Aorta (tissue), 5 donors: ENCODE measurements at regions of chr9 and their contacts with region 1.

Region 1: DNA sequence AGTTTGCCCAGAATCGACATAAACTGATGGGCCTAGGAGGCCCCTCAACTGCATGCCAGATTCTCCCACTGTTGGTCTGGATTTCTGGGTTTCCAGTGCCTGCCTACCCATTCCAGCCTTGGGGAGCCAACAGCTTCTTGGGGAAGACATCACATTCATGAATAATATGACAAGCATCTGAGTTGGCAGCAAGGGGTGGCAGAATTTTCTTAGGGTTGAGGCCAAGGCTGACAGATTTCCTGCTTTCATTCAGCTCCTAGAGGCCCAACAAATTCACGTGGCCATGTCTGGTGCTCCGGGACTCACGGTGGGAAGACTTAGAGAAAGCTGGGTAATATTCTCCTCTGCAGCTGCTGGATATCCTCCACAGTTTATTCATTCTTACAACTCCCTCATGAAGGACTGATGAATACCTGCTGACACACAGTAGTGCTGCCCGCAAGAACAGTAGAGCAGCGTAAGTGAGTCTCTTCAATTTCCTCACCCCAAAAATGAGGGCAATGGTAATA is 305.0 kb upstream of the TNC start:
- DNase-seq: peak; percentile 74 to 77
- ATAC-seq: peak; percentile 65
- H3K4me3 ChIP-seq: no peak overlapping the region
- H3K27ac ChIP-seq: peak overlapping the region; percentile 20 to 85
- H3K4me1 ChIP-seq: no peaks in the 10 kb centered on the region
- H3K27me3 ChIP-seq: no peaks in the 10 kb centered on the region

Region 2: DNA sequence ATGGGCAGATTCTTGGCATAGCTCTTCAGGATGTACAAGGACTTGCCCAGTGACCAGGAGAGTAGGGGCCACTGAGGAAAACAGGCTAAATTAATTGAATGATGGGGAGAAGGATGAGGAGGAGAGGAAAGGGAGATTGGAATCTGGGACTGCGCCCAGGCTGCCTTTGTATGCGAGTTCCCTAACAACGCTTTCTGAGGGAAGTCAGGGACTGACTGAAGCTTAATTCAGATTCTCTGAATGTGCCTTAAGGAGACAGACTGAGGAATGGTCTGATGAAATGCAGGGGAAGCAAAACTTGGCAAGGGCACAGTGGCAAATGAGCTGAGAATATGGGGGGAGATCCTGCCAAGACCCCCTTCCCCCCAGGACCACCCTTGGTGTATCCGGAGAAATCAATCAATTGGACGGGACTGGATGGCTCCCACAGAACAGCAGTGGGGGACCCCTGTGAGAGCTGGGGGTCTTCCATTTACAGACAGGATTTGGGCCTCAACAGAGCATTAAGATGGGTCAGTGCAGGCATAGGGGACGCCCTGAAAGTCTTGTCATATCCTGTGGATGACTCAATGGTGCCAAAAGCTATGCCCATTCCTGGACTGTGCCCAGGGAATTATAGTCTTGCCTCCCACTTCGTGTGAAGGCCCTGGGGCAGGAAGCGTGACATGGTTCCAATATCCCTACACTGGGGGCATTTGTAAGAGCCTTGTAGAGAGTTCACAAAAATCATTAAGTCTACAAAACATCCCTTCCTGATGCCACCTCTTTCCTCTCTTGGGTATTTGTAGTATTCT is 89.5 kb before region 1 on chr9:
- intact Hi-C with region 1: loop called in 1 of 2 experiments (anchors 10 kb)
- DNase-seq: no peak
- ATAC-seq: no peak
- H3K4me3 ChIP-seq: no peak overlapping the region
- H3K27ac ChIP-seq: no peak overlapping the region
- H3K4me1 ChIP-seq: no peaks in the 10 kb centered on the region
- H3K27me3 ChIP-seq: no peaks in the 10 kb centered on the region